ACHN (cell line): ENCODE measurements at regions of chr20 and their contacts with region 1.

Region 1: GRCh38 chr20:1313236-1313964 is 15.5 kb downstream of the SDCBP2 start:
- DNase-seq: peak; percentile 59

Region 2: GRCh38 chr20:1437235-1437904 is 124.0 kb after region 1 on chr20:
- in situ Hi-C with region 1: loop called (anchors 25 kb)
- DNase-seq: peak; percentile 61

Region 3: DNA sequence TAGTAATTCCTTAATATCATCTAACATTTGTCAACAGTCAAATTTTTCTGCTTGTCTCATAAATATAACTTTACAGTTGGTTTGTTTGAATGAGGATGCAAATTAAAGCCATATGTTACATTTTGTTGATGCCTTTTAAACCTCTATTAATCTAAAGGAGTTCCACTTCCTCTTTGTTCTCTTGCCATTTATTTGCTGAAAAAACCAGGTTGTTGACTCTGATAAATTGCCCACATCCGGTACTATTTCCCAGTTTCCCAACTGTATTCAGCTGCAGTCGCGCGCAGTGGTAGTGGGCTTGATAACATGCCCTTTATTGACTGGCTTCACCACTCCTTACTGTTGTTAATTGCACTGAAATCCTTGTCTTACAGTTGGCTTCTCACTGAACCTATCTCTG is 210.6 kb after region 1 on chr20:
- in situ Hi-C with region 1: no loop called
- DNase-seq: no peak

Region 4: DNA sequence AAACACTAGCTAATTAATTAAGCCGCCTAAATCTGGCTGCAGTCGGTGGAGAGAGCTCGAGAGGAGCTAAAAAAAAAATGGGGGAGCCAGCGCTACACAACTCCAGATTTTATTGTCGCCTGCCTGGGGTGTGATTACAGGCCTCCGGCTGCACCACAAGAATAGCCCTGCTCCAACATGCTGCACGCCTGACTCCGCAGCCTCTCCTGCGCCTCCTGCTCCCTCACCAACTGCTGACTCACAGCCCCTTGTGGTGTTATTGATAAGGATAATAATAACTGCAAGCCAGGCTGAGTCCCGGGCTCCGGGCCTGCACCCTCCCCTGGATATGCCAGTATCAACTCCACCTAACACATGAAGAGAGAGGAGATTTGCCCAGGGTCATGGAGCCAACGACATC is 598.7 kb after region 1 on chr20:
- in situ Hi-C with region 1: no loop called
- DNase-seq: no peak